ENCODE measurements at regions of chr5 and their contacts with region 1.

Region 1: DNA sequence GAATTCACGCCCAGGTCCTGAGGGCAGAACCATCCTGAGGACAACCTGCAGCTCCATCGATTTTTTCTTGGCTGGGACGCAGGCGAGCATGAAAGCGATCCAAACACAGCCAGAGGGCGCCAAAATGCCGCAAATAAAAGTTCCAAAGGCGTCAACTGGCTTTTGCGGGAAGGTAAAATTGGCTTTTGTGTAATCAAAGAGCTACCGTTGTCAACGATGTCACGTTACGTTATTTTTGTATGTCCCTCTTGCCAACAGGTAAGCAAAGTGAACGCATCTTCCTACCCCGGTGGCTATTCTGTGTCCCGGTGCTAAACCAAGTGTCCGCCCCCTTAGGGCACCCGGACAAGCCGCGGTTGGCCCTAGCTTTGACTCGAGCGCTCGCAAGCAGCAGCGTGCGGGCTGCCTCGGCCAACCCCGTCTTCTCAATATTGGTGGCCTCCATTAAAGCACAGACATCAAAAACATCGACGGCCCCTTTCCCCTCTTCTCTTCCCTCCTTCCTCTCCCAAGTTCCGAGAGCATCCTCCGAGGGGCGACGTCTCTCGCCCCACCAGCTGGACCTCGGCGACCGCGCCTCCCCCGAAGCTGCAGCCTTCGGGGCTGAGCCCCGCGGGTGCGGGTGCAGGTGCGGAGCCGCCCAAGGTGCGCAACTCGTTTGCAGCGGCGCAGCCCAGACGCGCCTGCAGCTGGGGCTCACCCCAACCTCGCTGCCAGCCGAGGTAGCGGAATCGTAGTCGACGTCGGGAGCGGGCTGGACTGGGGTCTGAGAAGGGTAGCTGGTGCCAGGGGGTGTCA is 1.1 kb upstream of the BASP1 start:
- DNase-seq: peak; percentile 81
- H3K4me3 Mint-ChIP-seq: peak overlapping the region; percentile 47
- H3K27ac Mint-ChIP-seq: no peak overlapping the region
- H3K4me1 Mint-ChIP-seq: peaks cover 14% of the 10 kb centered on the region
- H3K27me3 Mint-ChIP-seq: peaks cover 41% of the 10 kb centered on the region

Region 2: DNA sequence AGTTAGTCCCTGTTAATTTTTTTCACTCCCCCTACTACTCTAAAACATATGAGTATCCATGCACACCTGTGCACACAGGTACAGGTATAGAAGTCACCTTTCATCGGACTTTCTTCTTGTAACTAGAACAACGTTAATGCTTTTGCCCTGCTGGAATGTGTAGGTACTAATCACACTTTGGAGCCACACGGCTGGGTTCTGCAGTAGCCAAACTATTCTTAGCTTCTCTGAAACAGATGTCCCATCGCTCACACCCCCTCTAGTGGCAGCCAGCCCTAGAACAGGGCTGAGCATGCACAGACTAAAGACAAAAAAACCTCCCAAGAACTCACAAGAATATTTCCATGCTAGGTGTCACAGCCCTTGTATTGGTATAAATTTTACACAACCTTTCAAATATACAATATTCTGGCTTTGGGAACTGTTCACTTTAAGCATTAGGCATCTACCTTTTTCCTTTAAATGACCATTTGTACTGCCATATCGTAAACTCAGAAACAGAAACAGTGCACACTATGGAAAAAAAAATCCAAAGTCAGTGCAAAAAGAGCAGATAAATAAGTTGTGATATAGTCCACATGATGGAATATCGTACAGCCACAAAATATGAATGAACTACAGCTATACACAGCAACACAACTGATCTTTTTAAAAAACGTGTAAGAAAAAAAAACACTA is 663.6 kb before region 1 on chr5:
- CTCF ChIA-PET with region 1: no interaction called
- intact Hi-C with region 1: no loop called
- DNase-seq: peak; percentile 83
- H3K4me3 Mint-ChIP-seq: no peak overlapping the region
- H3K27ac Mint-ChIP-seq: no peak overlapping the region
- H3K4me1 Mint-ChIP-seq: peaks cover 41% of the 10 kb centered on the region
- H3K27me3 Mint-ChIP-seq: no peaks in the 10 kb centered on the region

Region 3: GRCh38 chr5:17238521-17239041 is 22.2 kb after region 1 on chr5:
- CTCF ChIA-PET with region 1: no interaction called
- intact Hi-C with region 1: no loop called
- DNase-seq: no peak
- H3K4me3 Mint-ChIP-seq: no peak overlapping the region
- H3K27ac Mint-ChIP-seq: no peak overlapping the region
- H3K4me1 Mint-ChIP-seq: no peaks in the 10 kb centered on the region
- H3K27me3 Mint-ChIP-seq: peaks cover 6% of the 10 kb centered on the region

Region 4: DNA sequence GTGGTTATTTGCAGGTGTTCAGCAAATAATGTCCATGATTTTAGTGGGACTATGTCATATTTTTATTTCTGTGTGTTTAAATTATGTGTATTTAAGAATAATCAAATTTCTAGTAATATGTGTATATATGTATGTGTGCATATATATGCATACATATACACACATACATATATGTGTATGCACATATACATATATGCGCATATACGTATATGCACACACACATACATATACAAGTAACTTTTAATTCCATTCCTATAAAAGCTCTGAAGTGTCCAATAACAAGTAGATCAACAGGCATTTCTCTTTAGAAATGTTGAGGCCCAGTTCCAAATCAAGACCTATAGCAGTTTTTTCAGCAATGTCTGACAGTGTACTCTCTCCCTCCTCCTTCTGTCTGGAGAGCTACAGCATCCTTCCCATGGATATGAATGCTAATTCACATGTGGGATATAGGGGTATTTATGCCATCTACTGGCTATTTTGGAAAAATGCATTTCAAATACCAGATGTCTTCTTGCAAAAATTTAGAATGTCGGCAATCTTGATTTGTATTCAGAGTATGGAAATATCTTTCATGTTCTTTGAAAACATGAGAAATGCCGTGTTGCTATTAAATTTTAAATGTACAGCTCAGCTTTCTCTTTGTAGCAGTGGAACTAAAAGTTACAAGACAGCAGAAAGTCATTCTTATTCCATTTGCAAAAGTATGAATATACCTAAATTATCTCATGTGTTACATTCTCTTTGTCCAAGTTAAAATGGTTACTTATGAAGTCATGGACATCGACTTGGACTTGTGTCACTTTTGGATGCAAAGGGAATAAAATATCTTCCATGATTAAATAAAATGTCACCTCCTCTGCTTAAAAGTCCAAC is 1065.5 kb after region 1 on chr5:
- CTCF ChIA-PET with region 1: no interaction called
- intact Hi-C with region 1: loop called (anchors 1 kb)
- DNase-seq: no peak
- H3K4me3 Mint-ChIP-seq: no peak overlapping the region
- H3K27ac Mint-ChIP-seq: no peak overlapping the region
- H3K4me1 Mint-ChIP-seq: no peaks in the 10 kb centered on the region
- H3K27me3 Mint-ChIP-seq: no peaks in the 10 kb centered on the region

Region 5: DNA sequence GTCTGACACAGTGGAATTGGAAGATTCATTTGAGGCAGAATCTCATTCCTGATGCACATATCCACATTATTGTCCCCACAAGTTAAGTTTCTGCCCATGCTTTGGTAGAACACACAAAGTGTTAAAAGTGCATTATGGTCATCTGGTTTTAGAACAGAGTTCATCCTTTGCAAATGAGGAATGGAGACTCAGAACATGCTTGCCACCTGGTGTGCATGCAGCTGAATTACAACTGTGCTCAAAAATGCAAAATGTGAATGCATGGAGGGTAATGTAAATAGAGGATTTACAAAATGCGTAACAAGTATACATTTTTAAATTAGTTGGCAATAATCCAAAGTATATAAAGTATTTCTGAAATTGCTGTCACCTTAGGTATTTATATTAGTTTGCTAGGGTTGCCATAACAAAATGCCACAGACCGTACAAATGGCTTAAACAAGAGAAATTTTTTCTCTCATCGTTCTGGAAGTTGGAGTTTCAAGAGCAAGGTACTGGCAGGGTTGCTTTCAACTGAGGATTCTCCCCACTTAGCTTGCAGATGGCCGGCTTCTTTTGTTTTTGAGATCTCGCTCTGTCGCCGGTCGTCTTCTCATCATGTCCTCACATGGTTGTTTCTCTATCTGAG is 1089.0 kb after region 1 on chr5:
- CTCF ChIA-PET with region 1: interaction called, 3 read pairs
- intact Hi-C with region 1: loop called (anchors 2 kb)
- DNase-seq: peak; percentile 7
- H3K4me3 Mint-ChIP-seq: no peak overlapping the region
- H3K27ac Mint-ChIP-seq: no peak overlapping the region
- H3K4me1 Mint-ChIP-seq: no peaks in the 10 kb centered on the region
- H3K27me3 Mint-ChIP-seq: no peaks in the 10 kb centered on the region

Region 6: GRCh38 chr5:18314192-18314778 is 1097.9 kb after region 1 on chr5:
- CTCF ChIA-PET with region 1: interaction called, 5 read pairs
- intact Hi-C with region 1: loop called (anchors 1 kb)
- DNase-seq: peak; percentile 17
- H3K4me3 Mint-ChIP-seq: no peak overlapping the region
- H3K27ac Mint-ChIP-seq: no peak overlapping the region
- H3K4me1 Mint-ChIP-seq: no peaks in the 10 kb centered on the region
- H3K27me3 Mint-ChIP-seq: no peaks in the 10 kb centered on the region

Measured in activated naive CD4-positive, alpha-beta T cell treated with anti-CD3 and anti-CD28 coated beads for 36 hours (primary cell).